HepG2 (cell line): ENCODE measurements at regions of chr1 and their contacts with region 1.

Region 1: DNA sequence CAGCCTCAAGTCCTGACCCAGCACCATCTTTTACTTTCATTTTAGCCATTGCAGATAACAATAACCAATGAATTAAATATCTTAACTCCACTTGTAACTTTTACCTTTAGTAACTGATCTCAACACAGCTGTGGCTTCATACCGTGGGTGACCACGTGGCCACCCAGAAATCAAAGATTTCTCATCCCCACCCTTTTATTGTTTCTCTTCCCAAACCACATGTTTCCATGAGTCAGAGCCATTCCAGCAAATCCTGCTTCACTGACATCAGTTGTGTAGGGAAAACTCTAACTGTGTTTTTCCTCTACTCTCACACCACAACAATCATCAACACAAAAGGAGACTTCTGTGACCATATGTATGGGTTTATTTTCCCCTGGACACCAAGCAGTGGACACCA is 25.1 kb upstream of the BRDT start:
- DNase-seq: no peak
- ATAC-seq: no peak
- H3K4me3 ChIP-seq: no peak overlapping the region
- H3K27ac ChIP-seq: no peak overlapping the region
- H3K4me1 ChIP-seq: peaks cover 11% of the 10 kb centered on the region
- H3K27me3 ChIP-seq: no peaks in the 10 kb centered on the region
- CTCF ChIP-seq: no peak
- EP300 ChIP-seq: no peak
- POLR2A ChIP-seq: no peak
- RAD21 ChIP-seq: no peak

Region 2: DNA sequence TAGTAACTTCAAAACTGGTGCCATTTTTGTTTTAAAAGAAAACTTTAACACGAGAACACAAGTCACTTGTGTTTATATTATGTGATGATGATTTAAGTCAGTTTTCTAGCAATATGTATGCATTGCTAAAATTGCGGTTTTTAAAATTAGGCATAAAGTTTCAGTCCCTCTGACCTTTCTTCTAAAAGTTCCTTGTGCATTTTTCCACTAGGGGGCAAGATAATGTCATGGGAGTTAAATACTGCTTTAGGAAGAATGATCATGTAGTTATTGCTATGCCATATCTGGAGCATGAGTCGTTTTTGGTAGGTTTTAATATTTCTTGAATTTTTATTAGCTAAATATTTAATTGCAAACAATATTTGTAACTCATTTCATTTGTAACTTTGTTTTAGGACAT is 412.8 kb before region 1 on chr1:
- CTCF ChIA-PET with region 1: interaction called, 15 read pairs
- POLR2A ChIA-PET with region 1: no interaction called
- in situ Hi-C with region 1: loop called (anchors 5 kb)
- intact Hi-C with region 1: loop called (anchors 1 kb)
- DNase-seq: peak; percentile 35
- ATAC-seq: no peak
- H3K4me3 ChIP-seq: no peak overlapping the region
- H3K27ac ChIP-seq: no peak overlapping the region
- H3K4me1 ChIP-seq: no peaks in the 10 kb centered on the region
- H3K27me3 ChIP-seq: no peaks in the 10 kb centered on the region
- CTCF ChIP-seq: peak; percentile 52
- EP300 ChIP-seq: no peak
- POLR2A ChIP-seq: no peak
- RAD21 ChIP-seq: no peak

Region 3: DNA sequence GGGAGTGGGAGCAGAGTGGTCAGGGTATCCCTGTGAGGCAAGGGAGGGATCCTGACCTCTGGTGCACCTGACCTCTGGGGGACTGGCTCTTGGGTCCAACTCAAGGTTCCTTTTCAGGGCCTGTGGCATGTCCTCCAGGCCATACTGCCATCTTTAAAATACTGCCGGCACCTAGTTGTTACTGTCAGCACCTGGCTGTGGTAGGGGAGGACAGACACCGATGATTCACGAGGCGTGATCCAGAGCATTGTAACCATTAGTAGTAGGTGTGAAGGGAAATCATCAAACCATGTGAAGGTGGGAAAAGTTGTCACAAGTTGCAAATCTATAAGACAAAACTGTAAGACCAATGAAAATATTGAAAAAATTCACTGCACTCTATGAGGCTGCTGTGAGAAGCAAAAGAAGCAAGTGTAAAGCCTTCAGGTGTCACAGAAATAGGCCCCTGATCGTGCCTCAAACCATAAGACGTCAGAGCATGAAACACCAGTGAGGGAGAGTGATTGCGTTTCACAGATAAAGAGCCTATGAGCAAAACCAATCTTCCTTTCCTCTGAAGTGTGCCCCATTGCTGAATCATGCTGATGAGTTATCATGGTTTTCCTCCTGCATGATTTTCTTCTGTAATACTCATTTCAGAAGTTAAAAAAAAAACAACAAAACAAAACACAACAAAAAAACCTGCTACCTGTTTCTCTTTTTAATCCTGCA is 368.2 kb before region 1 on chr1:
- CTCF ChIA-PET with region 1: no interaction called
- POLR2A ChIA-PET with region 1: no interaction called
- in situ Hi-C with region 1: no loop called
- intact Hi-C with region 1: loop called (anchors 10 kb)
- DNase-seq: no peak
- ATAC-seq: no peak
- H3K4me3 ChIP-seq: no peak overlapping the region
- H3K27ac ChIP-seq: no peak overlapping the region
- H3K4me1 ChIP-seq: no peaks in the 10 kb centered on the region
- H3K27me3 ChIP-seq: no peaks in the 10 kb centered on the region
- CTCF ChIP-seq: no peak
- EP300 ChIP-seq: no peak
- POLR2A ChIP-seq: no peak
- RAD21 ChIP-seq: no peak

Region 4: GRCh38 chr1:91617285-91617765 is 306.8 kb before region 1 on chr1:
- CTCF ChIA-PET with region 1: no interaction called
- POLR2A ChIA-PET with region 1: no interaction called
- in situ Hi-C with region 1: loop called (anchors 10 kb)
- intact Hi-C with region 1: loop called (anchors 2 kb)
- DNase-seq: peak; percentile 51
- ATAC-seq: peak; percentile 99
- H3K4me3 ChIP-seq: no peak overlapping the region
- H3K27ac ChIP-seq: no peak overlapping the region
- H3K4me1 ChIP-seq: peaks cover 9% of the 10 kb centered on the region; the same call in 1 of the 2 replicates
- H3K27me3 ChIP-seq: peaks cover 0 to 4% of the 10 kb centered on the region in 2 experiments; a peak in 1 of 5 replicates
- CTCF ChIP-seq: peak; percentile 71
- EP300 ChIP-seq: no peak
- POLR2A ChIP-seq: no peak
- RAD21 ChIP-seq: peak; percentile 12; the same call in 1 of the 2 replicates

Region 5: GRCh38 chr1:91851130-91852010 is 72.8 kb before region 1 on chr1:
- CTCF ChIA-PET with region 1: no interaction called
- POLR2A ChIA-PET with region 1: no interaction called
- in situ Hi-C with region 1: no loop called
- intact Hi-C with region 1: no loop called
- DNase-seq: no peak
- ATAC-seq: peak; percentile 80
- H3K4me3 ChIP-seq: no peak overlapping the region
- H3K27ac ChIP-seq: peak overlapping the region; percentile 4
- H3K4me1 ChIP-seq: peaks cover 68% of the 10 kb centered on the region
- H3K27me3 ChIP-seq: no peaks in the 10 kb centered on the region
- CTCF ChIP-seq: no peak
- EP300 ChIP-seq: no peak
- POLR2A ChIP-seq: no peak
- RAD21 ChIP-seq: no peak

Region 6: GRCh38 chr1:91885716-91886506 is 38.2 kb before region 1 on chr1 and contains the start of gene TGFBR3:
- CTCF ChIA-PET with region 1: no interaction called
- POLR2A ChIA-PET with region 1: no interaction called
- in situ Hi-C with region 1: no loop called
- intact Hi-C with region 1: loop called (anchors 2 kb)
- DNase-seq: peak; percentile 70
- ATAC-seq: peak; percentile 83
- H3K4me3 ChIP-seq: peak within 1 kb of the TSS; percentile 87 to 100 (median 97)
- H3K27ac ChIP-seq: peak within 1 kb of the TSS; percentile 81
- H3K4me1 ChIP-seq: peaks cover 52% of the 10 kb centered on the region
- H3K27me3 ChIP-seq: peaks cover 0 to 4% of the 10 kb centered on the region in 2 experiments; a peak in 1 of 5 replicates
- CTCF ChIP-seq: peak; percentile 45
- EP300 ChIP-seq: peak in 1 of 2 experiments; percentile 38; a peak in 1 of 4 replicates
- POLR2A ChIP-seq: peak; percentile 67 to 80
- RAD21 ChIP-seq: peak; percentile 75
- total RNA-seq, gene TGFBR3: 44.8 and 76.5 TPM in 2 replicates

Region 7: GRCh38 chr1:91958964-91959363 is 34.8 kb after region 1 on chr1:
- CTCF ChIA-PET with region 1: no interaction called
- POLR2A ChIA-PET with region 1: no interaction called
- in situ Hi-C with region 1: no loop called
- intact Hi-C with region 1: no loop called
- DNase-seq: peak; percentile 14
- ATAC-seq: no peak
- H3K4me3 ChIP-seq: no peak overlapping the region
- H3K27ac ChIP-seq: no peak overlapping the region
- H3K4me1 ChIP-seq: no peaks in the 10 kb centered on the region
- H3K27me3 ChIP-seq: no peaks in the 10 kb centered on the region; a peak in 1 of 5 replicates
- CTCF ChIP-seq: no peak
- EP300 ChIP-seq: no peak
- POLR2A ChIP-seq: no peak
- RAD21 ChIP-seq: no peak

Region 8: GRCh38 chr1:92298573-92299476 is 374.7 kb after region 1 on chr1 and contains the starts of genes GLMN and RPAP2:
- CTCF ChIA-PET with region 1: no interaction called
- POLR2A ChIA-PET with region 1: no interaction called
- in situ Hi-C with region 1: no loop called
- intact Hi-C with region 1: loop called (anchors 10 kb)
- DNase-seq: peak; percentile 63
- ATAC-seq: peak; percentile 98
- H3K4me3 ChIP-seq: peak within 1 kb of the TSS; percentile 79 to 98 (median 85)
- H3K27ac ChIP-seq: peak within 1 kb of the TSS; percentile 92
- H3K4me1 ChIP-seq: peaks cover 20% of the 10 kb centered on the region
- H3K27me3 ChIP-seq: no peaks in the 10 kb centered on the region
- CTCF ChIP-seq: peak; percentile 39
- EP300 ChIP-seq: no peak
- POLR2A ChIP-seq: peak; percentile 91 to 97
- RAD21 ChIP-seq: peak; percentile 73
- total RNA-seq, gene GLMN: 18.4 and 27.8 TPM in 2 replicates
- total RNA-seq, gene RPAP2: 34.8 and 50.7 TPM in 2 replicates